Right lobe of liver (tissue), 6 donors: ENCODE measurements at regions of chr6 and their contacts with region 1.

Region 1: GRCh38 chr6:39302669-39303424 is 11.4 kb downstream of the KCNK17 start:
- DNase-seq: peak; percentile 86 to 90 (median 87)
- ATAC-seq: peak; percentile 94 to 98 (median 94)
- H3K4me3 ChIP-seq: peak overlapping the region in 1 of 3 donors; percentile 27
- H3K27ac ChIP-seq: no peak overlapping the region
- H3K4me1 ChIP-seq: peaks cover 0 to 16% (median 9%) of the 10 kb centered on the region in 4 donors
- H3K27me3 ChIP-seq: no peaks in the 10 kb centered on the region
- CTCF ChIP-seq: peak; percentile 93 to 96 (median 94)
- POLR2A ChIP-seq: no peak

Region 2: DNA sequence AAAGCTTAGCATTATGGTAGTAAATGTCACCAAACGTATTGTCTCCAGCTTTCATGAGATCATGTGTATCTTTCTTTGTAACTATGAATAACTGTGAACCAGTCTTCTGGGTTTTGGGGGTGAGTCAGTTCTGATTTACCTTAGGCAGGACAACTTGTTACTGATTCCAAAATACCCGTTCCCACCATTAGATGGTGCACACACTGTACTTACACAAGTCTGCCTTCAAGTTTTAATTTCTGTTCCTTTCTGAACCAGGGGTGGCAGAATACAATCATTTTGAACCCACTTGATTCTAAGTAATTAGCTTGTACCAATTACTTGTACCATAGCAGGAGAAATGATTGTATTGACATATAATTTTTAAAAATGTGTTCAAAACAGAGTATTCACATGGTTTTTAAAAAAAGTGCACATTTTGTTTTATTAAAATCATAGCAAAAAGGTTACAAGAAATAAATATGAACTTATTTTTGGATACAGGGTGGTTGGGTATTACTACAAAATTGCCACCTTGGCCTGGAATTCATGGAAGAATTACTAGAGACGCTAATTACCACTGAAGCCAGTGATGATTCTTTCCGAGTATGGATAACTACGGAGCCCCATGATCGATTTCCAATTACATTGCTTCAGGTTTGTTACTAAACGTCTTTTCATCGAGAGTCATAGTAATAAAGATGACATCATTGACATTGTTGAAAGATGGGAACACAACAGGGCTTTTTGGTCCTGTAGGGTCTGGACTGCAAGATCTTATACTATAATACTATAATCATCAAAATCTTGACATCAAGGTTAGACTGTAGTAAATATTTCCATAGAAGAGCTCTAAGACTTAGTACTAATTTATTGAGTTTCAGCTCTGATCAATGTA is 329.4 kb before region 1 on chr6:
- intact Hi-C with region 1: loop called in 1 of 2 experiments (anchors 10 kb)
- DNase-seq: no peak
- ATAC-seq: peak; percentile 70 to 83 (median 74)
- H3K4me3 ChIP-seq: no peak overlapping the region
- H3K27ac ChIP-seq: no peak overlapping the region
- H3K4me1 ChIP-seq: peaks cover 0 to 30% (median 13%) of the 10 kb centered on the region in 4 donors
- H3K27me3 ChIP-seq: peaks cover 0 to 2% of the 10 kb centered on the region in 2 donors
- CTCF ChIP-seq: peak; percentile 68 to 84 (median 74)
- POLR2A ChIP-seq: no peak

Region 3: GRCh38 chr6:39166189-39166911 is 136.5 kb before region 1 on chr6:
- intact Hi-C with region 1: loop called (anchors 2 to 5 kb)
- DNase-seq: peak; percentile 85 to 87 (median 86)
- ATAC-seq: peak; percentile 88 to 97 (median 94)
- H3K4me3 ChIP-seq: no peak overlapping the region
- H3K27ac ChIP-seq: no peak overlapping the region
- H3K4me1 ChIP-seq: no peaks in the 10 kb centered on the region
- H3K27me3 ChIP-seq: no peaks in the 10 kb centered on the region
- CTCF ChIP-seq: peak; percentile 86 to 97 (median 90)
- POLR2A ChIP-seq: no peak

Region 4: GRCh38 chr6:39209360-39209811 is 93.5 kb before region 1 on chr6:
- intact Hi-C with region 1: no loop called
- DNase-seq: peak in 1 of 3 donors; percentile 46
- ATAC-seq: no peak
- H3K4me3 ChIP-seq: no peak overlapping the region
- H3K27ac ChIP-seq: no peak overlapping the region
- H3K4me1 ChIP-seq: peaks cover 0 to 95% (median 31%) of the 10 kb centered on the region in 4 donors
- H3K27me3 ChIP-seq: no peaks in the 10 kb centered on the region
- CTCF ChIP-seq: no peak
- POLR2A ChIP-seq: no peak

Region 5: DNA sequence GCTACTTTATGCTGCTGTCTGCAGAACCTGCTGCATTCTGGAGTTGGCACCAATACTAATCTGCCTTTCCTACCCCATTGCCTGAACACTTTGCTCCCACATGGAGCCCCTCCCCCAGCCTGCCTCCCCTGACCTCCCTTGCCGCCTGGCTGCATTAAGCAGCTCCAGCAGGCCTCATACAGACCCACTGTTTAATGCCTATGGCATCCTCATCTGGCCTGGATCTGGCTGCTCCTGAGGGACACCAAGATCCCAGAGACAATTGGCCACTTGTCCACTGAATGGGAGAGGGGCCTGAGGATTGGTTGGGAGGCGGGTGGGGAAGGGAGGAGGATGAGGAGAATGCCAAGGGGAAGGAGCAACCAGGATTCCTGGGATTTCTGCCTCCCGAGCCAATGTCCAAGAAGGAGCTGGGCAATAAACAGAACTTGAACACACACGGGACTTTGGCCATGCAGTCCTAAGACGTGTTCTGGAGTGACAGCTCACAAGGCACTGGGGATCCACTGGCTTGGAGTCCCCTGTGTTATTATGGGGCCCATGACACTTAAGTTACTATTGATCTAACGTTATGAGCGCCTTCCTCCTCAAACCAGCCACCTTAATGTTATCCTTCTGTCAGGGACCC is 63.2 kb before region 1 on chr6:
- intact Hi-C with region 1: loop called in 1 of 2 experiments (anchors 10 kb)
- DNase-seq: no peak
- ATAC-seq: no peak
- H3K4me3 ChIP-seq: no peak overlapping the region
- H3K27ac ChIP-seq: no peak overlapping the region
- H3K4me1 ChIP-seq: no peaks in the 10 kb centered on the region
- H3K27me3 ChIP-seq: no peaks in the 10 kb centered on the region
- CTCF ChIP-seq: no peak
- POLR2A ChIP-seq: no peak